GM10248 (cell line): ENCODE measurements at regions of chr16 and their contacts with region 1.

Region 1: DNA sequence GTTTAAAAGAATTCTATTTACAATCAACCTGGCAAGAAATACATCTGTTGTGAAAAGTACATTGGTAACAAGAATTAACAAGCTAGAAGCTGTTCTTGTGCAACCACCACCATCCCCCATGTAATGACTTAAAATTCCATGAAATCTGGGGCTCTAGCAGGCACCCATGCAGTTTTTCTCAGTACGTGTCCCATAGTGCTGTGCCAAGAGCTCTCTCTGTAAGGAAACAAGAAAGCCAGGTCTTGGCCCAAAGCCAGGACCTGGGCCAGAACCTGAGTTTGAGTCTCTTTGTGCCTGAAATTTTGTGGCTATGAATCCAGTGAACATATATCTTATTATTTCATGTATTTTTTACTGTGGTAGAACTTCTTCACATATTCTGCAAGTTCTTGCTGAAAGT is 46.6 kb downstream of the NUP93 start:
- DNase-seq: no peak
- CTCF ChIP-seq: no peak

Region 2: GRCh38 chr16:56793492-56793891 is 16.9 kb after region 1 on chr16:
- CTCF ChIA-PET with region 1: interaction called, 21 read pairs
- POLR2A ChIA-PET with region 1: no interaction called
- DNase-seq: no peak
- CTCF ChIP-seq: peak; percentile 13

Region 3: DNA sequence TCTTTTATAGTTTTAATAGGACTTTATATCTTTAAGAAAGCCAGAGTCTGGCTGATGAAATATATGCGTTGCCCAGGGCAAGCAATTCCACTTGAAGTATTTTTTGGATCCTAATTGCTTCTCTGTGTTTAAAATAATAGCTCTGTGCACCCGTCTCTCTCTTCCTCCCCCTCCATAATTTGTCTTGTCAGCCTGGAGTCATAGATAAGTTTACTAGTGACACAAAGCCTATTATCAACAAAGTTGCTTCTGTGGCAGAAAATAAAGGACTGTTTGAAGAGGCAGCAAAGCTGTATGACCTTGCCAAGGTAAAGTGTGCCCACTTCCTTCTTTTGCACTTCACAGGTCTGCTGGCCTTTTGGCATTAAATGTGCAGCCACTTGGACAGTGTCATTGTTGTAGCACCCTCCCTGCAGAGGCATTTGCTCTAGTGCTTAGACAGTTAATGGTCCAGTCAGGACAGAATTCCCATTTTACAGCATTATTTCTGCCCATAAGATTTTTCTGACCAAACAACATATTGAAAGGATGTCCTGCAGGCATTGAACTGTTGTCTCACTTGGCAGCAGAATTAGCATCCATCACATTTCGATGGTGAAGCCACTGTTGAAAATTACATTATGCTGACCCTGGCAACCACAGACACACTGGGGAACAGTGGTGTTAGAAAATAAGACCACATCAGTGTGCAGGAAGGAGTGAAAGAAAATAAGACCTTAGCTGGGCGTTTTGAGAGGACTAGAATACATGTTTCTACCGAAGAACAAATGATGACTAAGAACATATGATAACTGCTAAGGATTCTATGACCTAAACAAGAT is 60.1 kb after region 1 on chr16:
- CTCF ChIA-PET with region 1: no interaction called
- POLR2A ChIA-PET with region 1: no interaction called
- DNase-seq: no peak
- CTCF ChIP-seq: no peak